ENCODE measurements at regions of chr12 and their contacts with region 1.

Region 1: GRCh38 chr12:52213512-52214420 is 19.3 kb upstream of the KRT7 start:
- DNase-seq: peak; percentile 85 to 99
- H3K4me3 ChIP-seq: no peak overlapping the region
- H3K27ac ChIP-seq: no peak overlapping the region
- H3K4me1 ChIP-seq: peaks cover 0 to 4% (median under 1%) of the 10 kb centered on the region in 4 experiments; a peak in 4 of 7 replicates
- H3K27me3 ChIP-seq: no peaks in the 10 kb centered on the region
- CTCF ChIP-seq: peak; percentile 94 to 100 (median 99)
- EP300 ChIP-seq: no peak
- POLR2A ChIP-seq: no peak
- RAD21 ChIP-seq: peak; percentile 91 to 95

Region 2: DNA sequence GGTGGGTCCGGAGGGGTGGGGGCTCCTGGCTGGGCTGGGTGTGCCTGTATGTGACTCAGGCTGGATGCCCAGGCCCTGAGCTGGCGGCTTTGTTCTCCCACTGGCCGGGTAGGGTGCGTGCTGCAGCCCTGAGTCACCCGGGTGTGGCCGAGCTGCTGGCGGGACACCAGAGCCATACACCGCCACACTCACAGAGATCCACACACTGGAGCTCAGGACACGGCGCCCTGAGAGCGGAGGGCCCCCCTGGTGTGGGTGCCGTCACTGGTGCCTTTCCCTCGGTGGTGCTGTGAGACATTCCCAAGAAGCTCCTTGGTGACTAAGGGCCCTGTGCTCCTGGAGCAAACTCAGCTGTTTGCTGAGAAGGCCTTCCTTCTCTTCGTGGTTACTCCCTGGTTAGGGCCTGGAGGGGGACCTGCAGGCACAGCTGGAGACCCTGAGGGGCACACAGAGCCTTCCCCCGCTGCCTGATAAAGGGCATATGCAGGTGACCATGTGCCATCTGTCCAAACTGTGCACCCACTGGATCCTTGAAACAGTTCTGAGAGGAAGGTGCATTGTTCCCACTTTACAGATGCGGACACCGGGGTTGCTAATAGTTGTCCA is 66.3 kb before region 1 on chr12:
- CTCF ChIA-PET with region 1: interaction called, 24 read pairs
- POLR2A ChIA-PET with region 1: no interaction called
- DNase-seq: no peak
- H3K4me3 ChIP-seq: no peak overlapping the region
- H3K27ac ChIP-seq: peak overlapping the region; percentile 73
- H3K4me1 ChIP-seq: peaks cover 8 to 44% (median 19%) of the 10 kb centered on the region in 4 experiments
- H3K27me3 ChIP-seq: no peaks in the 10 kb centered on the region; a peak in 1 of 7 replicates
- CTCF ChIP-seq: no peak
- EP300 ChIP-seq: no peak
- POLR2A ChIP-seq: no peak
- RAD21 ChIP-seq: no peak

Region 3: GRCh38 chr12:52175371-52176350 is 38.1 kb before region 1 on chr12:
- CTCF ChIA-PET with region 1: no interaction called
- POLR2A ChIA-PET with region 1: no interaction called
- DNase-seq: no peak
- H3K4me3 ChIP-seq: no peak overlapping the region
- H3K27ac ChIP-seq: no peak overlapping the region
- H3K4me1 ChIP-seq: peaks cover 0 to 2% (median 0%) of the 10 kb centered on the region in 4 experiments; a peak in 4 of 7 replicates
- H3K27me3 ChIP-seq: no peaks in the 10 kb centered on the region
- CTCF ChIP-seq: peak; percentile 36 to 58 (median 49)
- EP300 ChIP-seq: no peak
- POLR2A ChIP-seq: no peak
- RAD21 ChIP-seq: peak; percentile 6 to 42; a peak in 2 of 4 replicates

Region 4: DNA sequence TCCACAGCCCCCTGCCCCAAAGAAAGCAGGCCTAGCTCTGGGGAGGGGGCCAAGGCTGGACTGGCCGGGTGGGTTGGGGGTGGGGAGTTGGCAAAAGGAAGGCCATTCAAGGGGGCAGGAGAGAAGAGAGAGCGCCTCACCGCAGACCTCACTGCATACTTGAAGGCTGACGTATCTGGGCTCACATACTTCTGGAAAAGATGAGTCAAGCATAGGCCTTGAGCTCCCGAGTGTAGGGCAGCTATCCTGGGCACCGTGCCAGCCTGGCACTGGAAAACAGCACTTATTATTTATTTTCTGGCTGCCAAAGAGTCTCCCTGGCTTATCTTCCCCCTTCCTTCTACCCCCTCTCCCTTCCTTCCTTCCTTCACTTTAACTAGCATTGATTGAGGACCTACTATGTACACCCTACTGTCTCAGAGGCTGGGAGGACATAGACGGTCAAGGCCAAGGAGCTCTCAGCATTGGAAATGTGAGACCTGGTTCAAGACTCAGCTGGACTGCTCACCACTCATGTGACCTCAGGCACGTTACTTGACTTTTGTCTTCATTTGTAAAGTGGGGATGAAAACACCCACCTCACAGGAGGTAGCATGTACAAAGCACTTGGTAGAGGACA is 21.5 kb before region 1 on chr12:
- CTCF ChIA-PET with region 1: no interaction called
- POLR2A ChIA-PET with region 1: no interaction called
- DNase-seq: no peak
- H3K4me3 ChIP-seq: no peak overlapping the region
- H3K27ac ChIP-seq: no peak overlapping the region
- H3K4me1 ChIP-seq: peaks cover 0 to 11% (median 6%) of the 10 kb centered on the region in 4 experiments; a peak in 4 of 7 replicates
- H3K27me3 ChIP-seq: no peaks in the 10 kb centered on the region
- CTCF ChIP-seq: no peak
- EP300 ChIP-seq: no peak
- POLR2A ChIP-seq: no peak
- RAD21 ChIP-seq: no peak

Region 5: GRCh38 chr12:52235822-52236692 is 22.3 kb after region 1 on chr12:
- CTCF ChIA-PET with region 1: interaction called, 42 read pairs
- POLR2A ChIA-PET with region 1: interaction called, 3 read pairs
- DNase-seq: no peak
- H3K4me3 ChIP-seq: no peak overlapping the region
- H3K27ac ChIP-seq: no peak overlapping the region
- H3K4me1 ChIP-seq: peaks cover 14 to 40% (median 25%) of the 10 kb centered on the region in 4 experiments
- H3K27me3 ChIP-seq: peaks cover 0 to 43% (median 21%) of the 10 kb centered on the region in 4 experiments; a peak in 6 of 7 replicates
- CTCF ChIP-seq: no peak
- EP300 ChIP-seq: no peak
- POLR2A ChIP-seq: no peak
- RAD21 ChIP-seq: no peak

Region 6: GRCh38 chr12:52268212-52268611 is 54.4 kb after region 1 on chr12:
- CTCF ChIA-PET with region 1: interaction called, 11 read pairs
- POLR2A ChIA-PET with region 1: no interaction called
- DNase-seq: no peak
- H3K4me3 ChIP-seq: no peak overlapping the region
- H3K27ac ChIP-seq: no peak overlapping the region
- H3K4me1 ChIP-seq: no peaks in the 10 kb centered on the region
- H3K27me3 ChIP-seq: no peaks in the 10 kb centered on the region; a peak in 1 of 7 replicates
- CTCF ChIP-seq: no peak
- EP300 ChIP-seq: no peak
- POLR2A ChIP-seq: no peak
- RAD21 ChIP-seq: no peak

Region 7: DNA sequence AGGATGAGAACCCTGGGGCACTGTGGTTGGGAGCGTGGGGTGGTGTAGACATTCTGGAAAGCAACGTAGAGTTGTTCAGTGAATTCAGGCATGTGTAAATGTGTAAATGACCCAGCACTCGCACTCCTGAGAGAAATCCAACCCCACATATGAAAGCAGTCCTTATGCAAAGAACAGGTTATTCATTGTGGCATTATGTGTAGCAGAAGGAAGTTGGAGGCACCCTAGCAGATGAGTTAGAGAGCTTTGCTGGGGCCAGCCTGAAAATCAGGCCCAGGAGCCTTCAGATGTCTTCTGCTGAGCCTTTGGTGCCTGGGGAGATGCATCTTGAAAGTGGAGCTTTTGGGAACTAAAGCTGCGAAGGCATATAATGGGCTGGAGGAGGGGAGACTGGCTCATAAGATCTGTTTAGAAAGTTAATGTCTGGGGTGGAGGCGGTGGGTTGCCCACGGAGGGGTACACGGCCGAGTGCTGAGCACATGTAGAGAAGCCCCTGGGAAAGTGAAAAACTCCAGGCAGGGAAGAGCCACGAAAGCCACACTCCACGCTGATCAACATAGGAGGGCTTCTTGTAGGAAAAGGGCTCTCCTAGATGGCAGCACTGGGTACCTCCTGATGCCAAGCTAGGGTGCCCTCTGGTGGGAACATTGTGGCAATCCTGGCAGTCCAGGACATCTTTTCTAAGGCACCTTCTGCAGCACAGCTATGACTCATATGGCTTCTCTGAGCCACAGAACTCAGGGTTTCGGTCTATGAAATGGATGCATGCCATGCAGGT is 113.5 kb after region 1 on chr12:
- CTCF ChIA-PET with region 1: interaction called, 17 read pairs
- POLR2A ChIA-PET with region 1: no interaction called
- DNase-seq: peak; percentile 67 to 75
- H3K4me3 ChIP-seq: no peak overlapping the region
- H3K27ac ChIP-seq: no peak overlapping the region
- H3K4me1 ChIP-seq: no peaks in the 10 kb centered on the region
- H3K27me3 ChIP-seq: no peaks in the 10 kb centered on the region
- CTCF ChIP-seq: peak; percentile 97 to 100 (median 100)
- EP300 ChIP-seq: no peak
- POLR2A ChIP-seq: no peak
- RAD21 ChIP-seq: peak; percentile 81 to 88